Natural killer cell (primary cell): ENCODE measurements at regions of chr9 and their contacts with region 1.

Region 1: GRCh38 chr9:272251-273213 is 57.9 kb downstream of the DOCK8 start:
- DNase-seq: peak; percentile 57 to 92
- ATAC-seq: peak; percentile 77 to 95 (median 87)
- H3K4me3 ChIP-seq: peak overlapping the region; percentile 69
- H3K4me3 Mint-ChIP-seq: peak overlapping the region; percentile 90
- H3K27ac ChIP-seq: peak overlapping the region; percentile 92
- H3K27ac Mint-ChIP-seq: no peak overlapping the region
- H3K4me1 ChIP-seq: peaks cover 60% of the 10 kb centered on the region
- H3K4me1 Mint-ChIP-seq: peaks cover 41 to 60% of the 10 kb centered on the region in 2 donors
- H3K27me3 ChIP-seq: no peaks in the 10 kb centered on the region
- H3K27me3 Mint-ChIP-seq: no peaks in the 10 kb centered on the region
- CTCF ChIP-seq: no peak

Region 2: GRCh38 chr9:214648-215493 is 57.7 kb before region 1 on chr9 and contains the start of gene DOCK8:
- intact Hi-C with region 1: loop called (anchors 2 kb)
- DNase-seq: peak; percentile 54 to 74
- ATAC-seq: peak; percentile 84 to 90 (median 84)
- H3K4me3 ChIP-seq: peak within 1 kb of the TSS; percentile 81
- H3K4me3 Mint-ChIP-seq: peak within 1 kb of the TSS; percentile 89
- H3K27ac ChIP-seq: peak within 1 kb of the TSS; percentile 77
- H3K27ac Mint-ChIP-seq: peak within 1 kb of the TSS; percentile 67 to 74
- H3K4me1 ChIP-seq: peaks cover 17% of the 10 kb centered on the region
- H3K4me1 Mint-ChIP-seq: peaks cover 15 to 24% of the 10 kb centered on the region in 2 donors
- H3K27me3 ChIP-seq: no peaks in the 10 kb centered on the region
- H3K27me3 Mint-ChIP-seq: no peaks in the 10 kb centered on the region
- CTCF ChIP-seq: peak; percentile 34
- total RNA-seq, gene DOCK8: 156 to 211 (median 207) TPM

Region 3: DNA sequence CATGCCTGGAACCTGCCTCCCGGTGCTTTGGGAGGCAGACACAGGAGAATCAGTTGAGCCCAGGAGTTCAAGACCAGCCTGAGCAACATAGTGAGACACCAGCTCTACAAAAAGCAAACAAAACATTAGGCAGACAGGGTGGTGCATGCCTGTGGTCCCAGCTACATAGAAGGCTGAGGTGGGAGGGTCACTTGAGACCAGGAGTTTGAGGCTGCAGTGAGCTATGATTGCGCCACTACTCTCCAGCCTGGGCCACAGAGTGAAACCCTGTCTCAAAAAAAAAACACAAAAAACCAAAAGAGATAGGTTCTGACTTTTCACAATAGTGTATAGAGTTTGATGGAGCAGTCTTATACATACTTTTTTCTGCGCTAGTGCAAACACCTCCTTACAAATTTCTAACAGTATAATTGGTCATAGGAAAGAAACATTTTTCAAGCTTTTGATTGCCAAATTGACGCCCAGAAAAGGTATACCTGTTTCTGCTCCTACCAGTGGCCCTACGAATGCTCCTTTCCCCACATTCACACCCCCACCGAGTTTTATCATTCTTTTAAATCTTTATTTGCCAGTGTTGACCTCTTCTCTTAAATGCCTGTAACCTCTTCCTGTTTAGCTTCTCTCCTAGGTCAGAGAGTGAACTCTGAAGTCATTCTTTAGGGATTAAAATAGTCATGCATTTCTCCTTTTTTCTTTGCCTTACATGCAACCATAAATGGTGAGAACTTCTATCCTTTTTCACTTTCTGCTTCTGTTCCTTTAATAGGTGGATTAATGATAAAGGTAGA is 50.3 kb before region 1 on chr9:
- intact Hi-C with region 1: loop called (anchors 2 kb)
- DNase-seq: no peak
- ATAC-seq: peak; percentile 11 to 65 (median 57)
- H3K4me3 ChIP-seq: no peak overlapping the region
- H3K4me3 Mint-ChIP-seq: peak overlapping the region; percentile 65
- H3K27ac ChIP-seq: peak overlapping the region; percentile 59
- H3K27ac Mint-ChIP-seq: peak overlapping the region; percentile 53 to 67
- H3K4me1 ChIP-seq: peaks cover 35% of the 10 kb centered on the region
- H3K4me1 Mint-ChIP-seq: peaks cover 17 to 27% of the 10 kb centered on the region in 2 donors
- H3K27me3 ChIP-seq: no peaks in the 10 kb centered on the region
- H3K27me3 Mint-ChIP-seq: no peaks in the 10 kb centered on the region
- CTCF ChIP-seq: no peak

Region 4: GRCh38 chr9:249025-249424 is 23.5 kb before region 1 on chr9:
- intact Hi-C with region 1: loop called (anchors 2 kb)
- DNase-seq: peak in 1 of 2 donors; percentile 63
- ATAC-seq: peak; percentile 24 to 63 (median 37)
- H3K4me3 ChIP-seq: no peak overlapping the region
- H3K4me3 Mint-ChIP-seq: no peak overlapping the region
- H3K27ac ChIP-seq: no peak overlapping the region
- H3K27ac Mint-ChIP-seq: peak overlapping the region in 1 of 2 donors; percentile 53
- H3K4me1 ChIP-seq: peaks cover 12% of the 10 kb centered on the region
- H3K4me1 Mint-ChIP-seq: peaks cover 21 to 29% of the 10 kb centered on the region in 2 donors
- H3K27me3 ChIP-seq: no peaks in the 10 kb centered on the region
- H3K27me3 Mint-ChIP-seq: no peaks in the 10 kb centered on the region
- CTCF ChIP-seq: no peak